Calu3 (cell line): ENCODE measurements at regions of chr1 and their contacts with region 1.

Region 1: DNA sequence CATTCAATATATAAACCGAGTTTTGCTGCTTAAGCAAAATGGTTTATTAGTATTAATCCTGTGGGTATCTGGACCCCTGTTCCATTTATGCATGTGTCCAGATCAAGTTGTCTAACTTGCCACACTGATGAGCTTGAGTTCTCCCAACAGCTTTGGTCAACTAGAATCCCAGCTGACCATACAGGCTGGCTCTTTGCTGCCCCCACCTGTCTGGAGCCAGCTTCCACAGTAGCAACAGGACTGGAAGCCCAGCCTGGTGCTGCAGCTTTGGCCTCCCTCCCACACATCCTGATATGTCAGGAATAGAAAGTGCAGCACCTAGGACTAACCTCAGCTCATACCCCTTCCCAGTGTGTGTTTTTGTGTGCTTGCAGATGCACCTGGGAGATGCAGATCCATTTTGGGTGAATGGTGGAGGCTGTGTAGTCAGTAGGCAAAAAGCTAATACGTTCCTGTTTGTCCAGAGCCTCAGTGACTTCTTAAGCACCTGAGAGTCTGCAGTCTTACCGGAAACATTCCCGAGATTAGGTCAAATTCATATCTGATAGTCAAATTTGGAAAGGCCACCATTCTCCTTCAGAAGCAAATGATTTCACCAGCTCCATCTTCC is 40.9 kb upstream of the BEND5 start:
- DNase-seq: peak; percentile 76
- H3K4me3 Mint-ChIP-seq: no peak overlapping the region
- H3K27ac Mint-ChIP-seq: no peak overlapping the region
- H3K4me1 Mint-ChIP-seq: peaks cover under 1% of the 10 kb centered on the region
- H3K27me3 Mint-ChIP-seq: no peaks in the 10 kb centered on the region
- CTCF ChIP-seq: peak; percentile 72

Region 2: DNA sequence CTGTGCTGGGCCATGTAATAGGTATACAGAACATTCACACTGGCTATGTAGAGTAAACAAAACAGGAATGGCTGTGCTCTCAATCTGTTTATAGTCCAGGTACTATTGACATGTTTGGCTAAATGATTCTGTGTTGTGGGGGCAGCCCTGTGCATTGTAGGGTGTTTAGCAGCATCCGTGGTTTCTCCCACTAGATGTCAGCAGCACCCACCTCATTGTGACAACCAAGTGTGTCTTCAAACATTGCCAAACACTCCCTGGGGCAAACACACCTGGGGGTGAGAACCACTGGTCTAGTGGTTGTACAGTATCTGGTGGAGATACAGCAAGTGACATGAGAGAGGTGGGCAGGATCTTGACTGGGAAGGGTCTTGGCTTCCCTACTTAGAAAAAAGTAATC is 265.2 kb before region 1 on chr1:
- CTCF ChIA-PET with region 1: no interaction called
- intact Hi-C with region 1: loop called (anchors 5 kb)
- DNase-seq: peak; percentile 42
- H3K4me3 Mint-ChIP-seq: no peak overlapping the region
- H3K27ac Mint-ChIP-seq: no peak overlapping the region
- H3K4me1 Mint-ChIP-seq: no peaks in the 10 kb centered on the region
- H3K27me3 Mint-ChIP-seq: peaks cover 72% of the 10 kb centered on the region
- CTCF ChIP-seq: no peak

Region 3: DNA sequence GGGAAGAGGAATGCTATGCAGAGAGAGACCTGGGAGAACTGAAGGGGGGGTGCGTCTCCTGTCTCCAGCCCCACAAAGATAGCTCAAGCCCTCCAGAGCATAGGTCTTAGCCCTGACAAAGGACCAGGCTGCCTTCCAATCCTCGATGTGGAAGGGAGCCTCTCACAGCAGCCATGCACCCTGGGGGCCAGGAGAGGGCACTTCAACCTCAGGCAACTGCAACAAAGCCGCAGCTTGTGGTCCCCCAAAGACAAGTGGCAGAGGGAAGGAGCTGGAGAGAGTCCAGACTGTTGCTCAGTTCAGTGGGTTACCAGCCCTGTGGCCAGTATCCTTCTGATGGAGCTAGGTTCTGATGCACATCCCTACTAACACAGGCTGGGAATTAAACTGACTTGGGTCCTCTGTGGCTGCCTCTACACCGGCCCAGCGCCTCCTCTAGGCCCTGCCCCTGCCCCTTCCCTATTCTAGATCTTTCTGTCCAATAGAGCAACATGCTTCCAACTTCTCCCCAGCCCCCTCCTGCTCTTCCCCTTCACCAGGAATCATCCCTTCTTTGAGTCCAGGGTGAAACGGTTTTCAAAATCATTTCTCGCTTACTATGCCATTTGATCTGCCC is 244.9 kb before region 1 on chr1:
- CTCF ChIA-PET with region 1: interaction called, 24 read pairs
- intact Hi-C with region 1: loop called (anchors 1 kb)
- DNase-seq: peak; percentile 62
- H3K4me3 Mint-ChIP-seq: no peak overlapping the region
- H3K27ac Mint-ChIP-seq: no peak overlapping the region
- H3K4me1 Mint-ChIP-seq: no peaks in the 10 kb centered on the region
- H3K27me3 Mint-ChIP-seq: peaks cover 71% of the 10 kb centered on the region
- CTCF ChIP-seq: peak; percentile 70

Region 4: GRCh38 chr1:48640836-48641492 is 176.6 kb before region 1 on chr1:
- CTCF ChIA-PET with region 1: no interaction called
- intact Hi-C with region 1: loop called (anchors 1 kb)
- DNase-seq: no peak
- H3K4me3 Mint-ChIP-seq: no peak overlapping the region
- H3K27ac Mint-ChIP-seq: no peak overlapping the region
- H3K4me1 Mint-ChIP-seq: no peaks in the 10 kb centered on the region
- H3K27me3 Mint-ChIP-seq: peaks cover 91% of the 10 kb centered on the region
- CTCF ChIP-seq: no peak

Region 5: DNA sequence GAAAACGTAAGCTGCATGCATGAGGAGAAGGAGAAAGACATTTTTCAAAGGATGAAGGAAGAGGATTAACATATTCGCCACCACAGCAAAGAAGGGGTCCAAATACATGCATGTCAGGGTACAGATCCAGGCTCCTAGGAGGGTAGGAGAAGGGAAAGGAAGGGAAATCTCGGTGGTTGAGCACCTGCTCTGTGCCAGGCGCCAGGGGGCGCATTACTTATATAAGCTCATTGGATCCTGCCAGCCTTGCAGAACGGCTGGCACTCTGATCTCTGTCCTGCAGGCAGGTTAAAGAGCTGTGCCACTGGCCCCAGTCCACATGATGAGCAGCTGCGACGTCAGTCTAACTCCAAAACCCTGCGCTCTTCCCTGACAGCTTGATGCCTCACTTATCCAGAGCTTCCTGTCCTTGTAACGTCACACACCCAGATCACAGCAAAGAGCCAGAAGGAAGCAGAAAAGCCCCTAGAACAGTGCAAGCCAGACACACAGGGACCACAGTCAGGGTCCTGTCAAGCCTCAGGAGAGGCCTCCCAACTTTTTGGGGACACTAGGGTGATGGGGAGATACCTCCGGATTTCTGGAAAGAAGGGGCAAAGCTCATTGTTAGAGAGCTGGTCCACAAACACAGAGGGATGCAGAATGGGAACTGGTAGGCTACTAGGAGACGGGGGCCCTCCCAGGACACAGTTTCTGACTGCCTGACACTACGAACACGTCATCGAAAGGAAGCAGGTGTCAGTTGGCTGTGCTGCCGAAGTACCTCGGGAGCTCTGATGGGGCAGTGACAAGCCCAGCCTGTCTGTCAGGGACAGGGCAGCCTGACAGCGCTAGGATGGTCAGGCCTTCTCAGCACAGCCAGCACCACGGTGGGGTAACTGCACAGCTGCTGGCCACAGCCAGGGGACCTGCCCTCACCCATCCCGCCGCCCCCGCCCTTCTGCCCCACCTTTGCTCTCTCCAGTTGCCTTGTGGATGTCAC is 140.0 kb before region 1 on chr1:
- CTCF ChIA-PET with region 1: interaction called, 78 read pairs
- intact Hi-C with region 1: loop called (anchors 1 kb)
- DNase-seq: peak; percentile 80
- H3K4me3 Mint-ChIP-seq: no peak overlapping the region
- H3K27ac Mint-ChIP-seq: no peak overlapping the region
- H3K4me1 Mint-ChIP-seq: peaks cover 23% of the 10 kb centered on the region
- H3K27me3 Mint-ChIP-seq: no peaks in the 10 kb centered on the region
- CTCF ChIP-seq: peak; percentile 80